ENCODE measurements at regions of chr4 and their contacts with region 1.

Region 1: GRCh38 chr4:98995183-98996055 is at the start of gene METAP1:
- DNase-seq: peak; percentile 91 to 99 (median 96)
- ATAC-seq: peak; percentile 83
- H3K4me3 ChIP-seq: peak within 1 kb of the TSS; percentile 79 to 87
- H3K4me3 Mint-ChIP-seq: peak within 1 kb of the TSS; percentile 89
- H3K27ac ChIP-seq: peak within 1 kb of the TSS; percentile 77 to 83
- H3K27ac Mint-ChIP-seq: peak within 1 kb of the TSS; percentile 98
- H3K4me1 ChIP-seq: peaks cover 21% of the 10 kb centered on the region
- H3K4me1 Mint-ChIP-seq: peaks cover 39% of the 10 kb centered on the region
- H3K27me3 ChIP-seq: no peaks in the 10 kb centered on the region
- H3K27me3 Mint-ChIP-seq: no peaks in the 10 kb centered on the region
- CTCF ChIP-seq: peak; percentile 66
- total RNA-seq, gene METAP1: 21.0 to 23.2 TPM

Region 2: GRCh38 chr4:98143001-98143899 is 852.2 kb before region 1 on chr4 and contains the start of gene STPG2:
- CTCF ChIA-PET with region 1: interaction called, 5 read pairs
- POLR2A ChIA-PET with region 1: interaction called, 6 read pairs
- intact Hi-C with region 1: loop called (anchors 1 kb)
- DNase-seq: peak; percentile 87 to 96 (median 93)
- ATAC-seq: peak; percentile 99
- H3K4me3 ChIP-seq: peak within 1 kb of the TSS; percentile 69 to 70
- H3K4me3 Mint-ChIP-seq: peak within 1 kb of the TSS; percentile 94
- H3K27ac ChIP-seq: peak within 1 kb of the TSS; percentile 68 to 90
- H3K27ac Mint-ChIP-seq: peak within 1 kb of the TSS; percentile 96
- H3K4me1 ChIP-seq: peaks cover 7% of the 10 kb centered on the region
- H3K4me1 Mint-ChIP-seq: peaks cover 17% of the 10 kb centered on the region
- H3K27me3 ChIP-seq: peaks cover 0 to 2% of the 10 kb centered on the region in 2 experiments
- H3K27me3 Mint-ChIP-seq: no peaks in the 10 kb centered on the region
- CTCF ChIP-seq: peak; percentile 64
- total RNA-seq, gene STPG2: not detected

Region 3: GRCh38 chr4:98467627-98468072 is 527.8 kb before region 1 on chr4:
- CTCF ChIA-PET with region 1: interaction called, 10 read pairs
- POLR2A ChIA-PET with region 1: interaction called, 3 read pairs
- intact Hi-C with region 1: loop called (anchors 1 to 5 kb)
- DNase-seq: peak; percentile 31 to 84 (median 67)
- ATAC-seq: peak; percentile 91
- H3K4me3 ChIP-seq: peak overlapping the region; percentile 32 to 43
- H3K4me3 Mint-ChIP-seq: peak overlapping the region; percentile 77
- H3K27ac ChIP-seq: no peak overlapping the region
- H3K27ac Mint-ChIP-seq: no peak overlapping the region
- H3K4me1 ChIP-seq: peaks cover 14% of the 10 kb centered on the region
- H3K4me1 Mint-ChIP-seq: peaks cover 28% of the 10 kb centered on the region
- H3K27me3 ChIP-seq: no peaks in the 10 kb centered on the region
- H3K27me3 Mint-ChIP-seq: no peaks in the 10 kb centered on the region
- CTCF ChIP-seq: peak; percentile 68

Region 4: GRCh38 chr4:98958065-98958464 is 37.4 kb before region 1 on chr4:
- CTCF ChIA-PET with region 1: no interaction called
- POLR2A ChIA-PET with region 1: no interaction called
- intact Hi-C with region 1: no loop called
- DNase-seq: no peak
- ATAC-seq: no peak
- H3K4me3 ChIP-seq: no peak overlapping the region
- H3K4me3 Mint-ChIP-seq: no peak overlapping the region
- H3K27ac ChIP-seq: no peak overlapping the region
- H3K27ac Mint-ChIP-seq: no peak overlapping the region
- H3K4me1 ChIP-seq: no peaks in the 10 kb centered on the region
- H3K4me1 Mint-ChIP-seq: no peaks in the 10 kb centered on the region
- H3K27me3 ChIP-seq: no peaks in the 10 kb centered on the region
- H3K27me3 Mint-ChIP-seq: peaks cover 9% of the 10 kb centered on the region
- CTCF ChIP-seq: no peak

Region 5: DNA sequence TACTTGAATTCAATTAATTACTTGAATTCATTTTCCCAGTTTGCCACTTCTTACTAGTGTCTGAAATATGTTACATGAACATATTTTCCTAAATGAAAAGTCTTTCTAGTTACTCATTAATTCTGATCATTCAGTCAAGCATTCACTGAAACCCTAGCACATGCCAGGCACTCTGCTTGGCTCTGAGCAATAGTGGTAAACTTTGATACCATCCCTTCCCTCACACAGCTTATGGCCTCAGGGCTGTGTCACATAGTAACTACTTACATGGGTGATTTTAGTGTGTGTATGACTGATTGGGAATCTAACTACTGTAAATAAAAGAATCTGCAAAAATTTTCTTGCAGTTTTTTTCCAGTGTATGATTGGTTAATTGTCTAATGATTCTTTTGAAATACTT is 32.8 kb after region 1 on chr4:
- CTCF ChIA-PET with region 1: interaction called, 10 read pairs
- POLR2A ChIA-PET with region 1: no interaction called
- intact Hi-C with region 1: no loop called
- DNase-seq: no peak
- ATAC-seq: no peak
- H3K4me3 ChIP-seq: no peak overlapping the region
- H3K4me3 Mint-ChIP-seq: no peak overlapping the region
- H3K27ac ChIP-seq: no peak overlapping the region
- H3K27ac Mint-ChIP-seq: no peak overlapping the region
- H3K4me1 ChIP-seq: no peaks in the 10 kb centered on the region
- H3K4me1 Mint-ChIP-seq: peaks cover 73% of the 10 kb centered on the region
- H3K27me3 ChIP-seq: no peaks in the 10 kb centered on the region
- H3K27me3 Mint-ChIP-seq: no peaks in the 10 kb centered on the region
- CTCF ChIP-seq: no peak

Region 6: DNA sequence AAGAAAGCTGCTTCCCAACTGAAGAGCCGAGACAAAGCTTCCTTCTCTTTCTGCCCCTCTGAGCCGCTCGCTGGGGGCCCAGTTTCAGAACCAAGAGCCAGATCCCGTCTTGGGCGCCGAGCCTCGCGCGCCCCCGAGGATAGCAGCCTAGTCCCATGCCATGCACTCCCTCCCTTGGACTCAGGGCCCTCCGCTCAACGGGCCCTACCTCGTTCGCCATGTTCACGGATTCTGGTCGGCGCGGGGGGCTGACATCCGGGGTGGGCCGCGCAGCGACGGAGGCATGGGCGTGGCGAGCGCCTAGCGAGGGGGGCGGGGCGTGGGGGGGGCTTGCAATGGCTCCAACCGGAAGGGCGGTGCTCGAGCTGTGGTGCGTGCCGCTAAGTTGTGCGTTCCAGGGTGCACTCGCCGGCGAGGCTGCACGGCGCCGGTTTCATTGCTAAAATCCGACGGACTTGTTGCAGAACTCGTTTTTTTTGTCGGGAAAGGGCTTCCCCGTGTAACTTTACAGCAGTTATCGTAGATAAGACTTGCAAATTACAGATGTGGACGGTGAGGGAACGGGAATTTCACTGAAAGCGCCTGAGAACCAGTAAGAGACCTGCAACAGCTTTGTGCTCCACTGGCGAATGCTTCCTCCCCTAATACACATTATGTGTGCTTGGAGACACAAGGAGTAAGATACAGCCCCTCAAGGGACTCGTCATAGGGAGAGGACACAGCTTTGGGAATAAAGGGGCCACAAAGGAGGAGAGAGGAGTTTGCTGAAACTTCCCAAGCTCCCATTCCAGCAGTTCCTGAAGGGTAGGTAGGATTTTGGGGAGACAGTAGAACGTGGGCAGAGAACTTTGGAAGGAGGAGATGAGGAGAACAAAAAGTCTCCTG is 93.3 kb after region 1 on chr4 and contains the start of gene ADH5:
- CTCF ChIA-PET with region 1: interaction called, 12 read pairs
- POLR2A ChIA-PET with region 1: interaction called, 52 read pairs
- intact Hi-C with region 1: loop called (anchors 1 kb)
- DNase-seq: peak; percentile 88 to 94 (median 93)
- ATAC-seq: peak; percentile 96
- H3K4me3 ChIP-seq: peak within 1 kb of the TSS; percentile 59 to 91
- H3K4me3 Mint-ChIP-seq: peak within 1 kb of the TSS; percentile 99
- H3K27ac ChIP-seq: peak within 1 kb of the TSS; percentile 76 to 86
- H3K27ac Mint-ChIP-seq: peak within 1 kb of the TSS; percentile 99
- H3K4me1 ChIP-seq: peaks cover 23% of the 10 kb centered on the region
- H3K4me1 Mint-ChIP-seq: peaks cover 58% of the 10 kb centered on the region
- H3K27me3 ChIP-seq: no peaks in the 10 kb centered on the region
- H3K27me3 Mint-ChIP-seq: no peaks in the 10 kb centered on the region
- CTCF ChIP-seq: no peak
- total RNA-seq, gene ADH5: 50.0 to 51.7 TPM

Region 7: GRCh38 chr4:99563310-99564186 is 568.1 kb after region 1 on chr4 and contains the start of gene TRMT10A:
- CTCF ChIA-PET with region 1: interaction called, 3 read pairs
- POLR2A ChIA-PET with region 1: interaction called, 4 read pairs
- intact Hi-C with region 1: loop called (anchors 1 to 5 kb)
- DNase-seq: peak; percentile 87 to 98 (median 95)
- ATAC-seq: peak; percentile 79
- H3K4me3 ChIP-seq: peak within 1 kb of the TSS; percentile 71 to 83
- H3K4me3 Mint-ChIP-seq: peak within 1 kb of the TSS; percentile 94
- H3K27ac ChIP-seq: peak within 1 kb of the TSS; percentile 92 to 96
- H3K27ac Mint-ChIP-seq: peak within 1 kb of the TSS; percentile 99
- H3K4me1 ChIP-seq: no peaks in the 10 kb centered on the region
- H3K4me1 Mint-ChIP-seq: peaks cover 19% of the 10 kb centered on the region
- H3K27me3 ChIP-seq: no peaks in the 10 kb centered on the region
- H3K27me3 Mint-ChIP-seq: peaks cover 19% of the 10 kb centered on the region
- CTCF ChIP-seq: no peak
- total RNA-seq, gene TRMT10A: 0.90 to 1.5 TPM

Region 8: GRCh38 chr4:99894161-99894997 is 899.0 kb after region 1 on chr4 and contains the start of gene LAMTOR3:
- CTCF ChIA-PET with region 1: no interaction called
- POLR2A ChIA-PET with region 1: no interaction called
- intact Hi-C with region 1: loop called (anchors 5 to 10 kb)
- DNase-seq: peak; percentile 80 to 97 (median 88)
- ATAC-seq: peak; percentile 94
- H3K4me3 ChIP-seq: peak within 1 kb of the TSS; percentile 68 to 80
- H3K4me3 Mint-ChIP-seq: peak within 1 kb of the TSS; percentile 97
- H3K27ac ChIP-seq: peak within 1 kb of the TSS; percentile 77 to 87
- H3K27ac Mint-ChIP-seq: peak within 1 kb of the TSS; percentile 98
- H3K4me1 ChIP-seq: peaks cover 30% of the 10 kb centered on the region
- H3K4me1 Mint-ChIP-seq: peaks cover 49% of the 10 kb centered on the region
- H3K27me3 ChIP-seq: no peaks in the 10 kb centered on the region
- H3K27me3 Mint-ChIP-seq: no peaks in the 10 kb centered on the region
- CTCF ChIP-seq: no peak
- total RNA-seq, gene LAMTOR3: 29.3 to 32.4 TPM